ENCODE measurements at regions of chr10 and their contacts with region 1.

Region 1: GRCh38 chr10:60964257-60965235 is 20.6 kb upstream of the RHOBTB1 start:
- DNase-seq: peak; percentile 48 to 59
- ATAC-seq: peak; percentile 79

Region 2: GRCh38 chr10:60816628-60817397 is 147.7 kb before region 1 on chr10:
- intact Hi-C with region 1: loop called in 1 of 2 experiments (anchors 5 kb)
- DNase-seq: peak in 1 of 2 donors; percentile 12
- ATAC-seq: peak; percentile 82

Region 3: DNA sequence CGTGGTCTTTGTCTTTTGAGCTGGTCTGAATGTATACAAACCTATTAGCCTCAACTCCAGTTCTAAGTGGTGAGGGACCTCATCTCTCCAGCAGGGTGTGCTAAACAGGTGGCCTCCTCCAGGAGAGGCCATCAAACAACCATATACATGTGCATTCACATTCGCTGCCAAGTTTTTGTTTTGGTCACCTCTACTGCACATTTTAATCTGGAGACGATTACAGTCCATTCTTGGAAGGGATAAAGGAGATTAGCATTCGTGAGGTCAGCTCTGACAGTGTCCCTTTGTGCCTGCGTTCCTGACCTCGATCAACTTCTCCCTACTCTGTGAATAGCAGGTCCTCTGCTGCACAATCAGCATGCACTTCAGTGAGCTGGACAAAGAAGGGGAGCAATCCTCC is 81.4 kb before region 1 on chr10:
- intact Hi-C with region 1: loop called in 1 of 2 experiments (anchors 10 kb)
- DNase-seq: peak in 1 of 2 donors; percentile 37
- ATAC-seq: peak; percentile 91

Region 4: GRCh38 chr10:61179766-61180165 is 215.2 kb after region 1 on chr10:
- intact Hi-C with region 1: no loop called
- DNase-seq: no peak
- ATAC-seq: no peak

Region 5: GRCh38 chr10:61271127-61271823 is 306.7 kb after region 1 on chr10:
- intact Hi-C with region 1: loop called in 1 of 2 experiments (anchors 10 kb)
- DNase-seq: no peak
- ATAC-seq: no peak

Region 6: DNA sequence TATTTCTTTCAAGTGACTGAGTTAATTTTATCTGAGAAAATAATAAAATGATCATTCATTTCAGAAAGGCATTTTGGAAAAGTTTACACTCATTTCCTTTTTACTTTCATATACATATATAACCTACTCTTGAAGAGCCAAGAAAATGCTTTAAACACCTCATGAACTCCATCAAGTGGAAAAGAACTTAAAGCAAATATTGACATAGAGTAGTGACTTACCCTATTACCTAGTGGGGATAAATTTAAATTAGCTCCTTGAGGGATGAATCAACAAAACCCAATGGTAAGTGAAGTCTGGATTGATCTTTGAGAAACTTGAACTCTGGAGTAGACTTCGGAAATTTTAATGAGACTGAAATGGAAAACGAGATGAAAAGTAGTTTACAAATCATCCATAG is 400.1 kb after region 1 on chr10:
- intact Hi-C with region 1: no loop called
- DNase-seq: no peak
- ATAC-seq: no peak

Measured in left colon (tissue), 2 donors.